ENCODE measurements at regions of chr3 and their contacts with region 1.

Region 1: GRCh38 chr3:57841818-57842217 is 85.7 kb downstream of the SLMAP start:
- DNase-seq: no peak
- H3K4me3 Mint-ChIP-seq: no peak overlapping the region
- H3K27ac Mint-ChIP-seq: no peak overlapping the region
- H3K4me1 Mint-ChIP-seq: peaks cover 3% of the 10 kb centered on the region
- H3K27me3 Mint-ChIP-seq: no peaks in the 10 kb centered on the region

Region 2: DNA sequence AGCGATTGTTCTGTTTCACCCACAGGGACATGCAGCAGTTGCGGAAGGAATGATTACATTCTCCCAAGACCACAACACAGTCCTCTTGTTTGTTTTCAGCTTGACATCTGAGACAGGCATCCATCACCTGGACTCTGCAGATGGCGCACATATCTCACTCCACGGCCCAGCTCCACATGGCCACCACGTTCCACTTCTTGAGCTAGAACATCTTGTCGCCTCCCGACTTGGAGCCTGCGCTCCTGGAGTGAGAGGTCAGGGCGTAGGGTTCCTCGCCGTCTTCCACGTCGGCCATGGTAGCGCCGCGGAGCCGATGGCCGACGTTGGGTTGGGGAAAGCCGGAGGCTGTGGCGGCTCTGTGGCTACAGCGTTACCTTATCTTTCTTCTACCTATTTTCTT is 322.1 kb before region 1 on chr3:
- CTCF ChIA-PET with region 1: no interaction called
- POLR2A ChIA-PET with region 1: no interaction called
- DNase-seq: no peak
- H3K4me3 Mint-ChIP-seq: no peak overlapping the region
- H3K27ac Mint-ChIP-seq: no peak overlapping the region
- H3K4me1 Mint-ChIP-seq: peaks cover 3% of the 10 kb centered on the region
- H3K27me3 Mint-ChIP-seq: peaks cover 13% of the 10 kb centered on the region

Region 3: GRCh38 chr3:57803647-57804081 is 38.2 kb before region 1 on chr3:
- CTCF ChIA-PET with region 1: interaction called, 3 read pairs
- POLR2A ChIA-PET with region 1: interaction called, 12 read pairs
- DNase-seq: peak; percentile 7
- H3K4me3 Mint-ChIP-seq: peak overlapping the region; percentile 38
- H3K27ac Mint-ChIP-seq: peak overlapping the region; percentile 90
- H3K4me1 Mint-ChIP-seq: peaks cover 43% of the 10 kb centered on the region
- H3K27me3 Mint-ChIP-seq: no peaks in the 10 kb centered on the region

Measured in activated CD4-positive, alpha-beta T cell treated with anti-CD3 and anti-CD28 coated beads, Interleukin-2, amount 10 ng/mL, durations not matched to agents 7 days and 5 days (primary cell).